ENCODE measurements at regions of chr9 and their contacts with region 1.

Region 1: DNA sequence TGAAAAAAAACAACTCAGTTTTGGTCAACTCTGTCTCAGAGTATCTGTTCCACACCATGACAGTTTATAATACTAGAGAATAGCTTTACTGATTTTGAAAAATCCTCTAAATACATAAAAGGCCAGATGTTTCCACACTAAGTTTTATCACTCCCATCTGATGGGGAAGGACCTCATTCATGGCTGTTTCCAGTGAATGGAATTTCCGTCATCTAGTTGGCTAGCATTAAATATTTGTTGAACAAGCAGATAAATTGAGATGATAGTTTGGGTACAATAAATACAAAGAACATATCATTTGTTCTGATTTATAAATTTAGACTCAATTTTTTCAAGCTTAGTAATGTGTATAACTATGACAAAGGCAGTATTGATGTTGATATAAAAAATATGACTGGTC is 408.5 kb downstream of the PTPRD start:
- DNase-seq: no peak
- H3K4me3 ChIP-seq: no peak overlapping the region
- H3K27ac ChIP-seq: no peak overlapping the region
- H3K4me1 ChIP-seq: no peaks in the 10 kb centered on the region
- H3K27me3 ChIP-seq: no peaks in the 10 kb centered on the region
- CTCF ChIP-seq: no peak
- EP300 ChIP-seq: no peak
- POLR2A ChIP-seq: no peak

Region 2: GRCh38 chr9:10127867-10128266 is 76.4 kb before region 1 on chr9:
- intact Hi-C with region 1: loop called (anchors 10 kb)
- DNase-seq: no peak
- H3K4me3 ChIP-seq: no peak overlapping the region
- H3K27ac ChIP-seq: no peak overlapping the region
- H3K4me1 ChIP-seq: no peaks in the 10 kb centered on the region
- H3K27me3 ChIP-seq: no peaks in the 10 kb centered on the region
- CTCF ChIP-seq: no peak
- EP300 ChIP-seq: no peak
- POLR2A ChIP-seq: no peak

Region 3: GRCh38 chr9:10274988-10275387 is 70.7 kb after region 1 on chr9:
- intact Hi-C with region 1: loop called (anchors 10 kb)
- DNase-seq: no peak
- H3K4me3 ChIP-seq: no peak overlapping the region
- H3K27ac ChIP-seq: no peak overlapping the region
- H3K4me1 ChIP-seq: no peaks in the 10 kb centered on the region
- H3K27me3 ChIP-seq: no peaks in the 10 kb centered on the region
- CTCF ChIP-seq: no peak
- EP300 ChIP-seq: no peak
- POLR2A ChIP-seq: no peak